ENCODE measurements at regions of chr5 and their contacts with region 1.

Region 1: DNA sequence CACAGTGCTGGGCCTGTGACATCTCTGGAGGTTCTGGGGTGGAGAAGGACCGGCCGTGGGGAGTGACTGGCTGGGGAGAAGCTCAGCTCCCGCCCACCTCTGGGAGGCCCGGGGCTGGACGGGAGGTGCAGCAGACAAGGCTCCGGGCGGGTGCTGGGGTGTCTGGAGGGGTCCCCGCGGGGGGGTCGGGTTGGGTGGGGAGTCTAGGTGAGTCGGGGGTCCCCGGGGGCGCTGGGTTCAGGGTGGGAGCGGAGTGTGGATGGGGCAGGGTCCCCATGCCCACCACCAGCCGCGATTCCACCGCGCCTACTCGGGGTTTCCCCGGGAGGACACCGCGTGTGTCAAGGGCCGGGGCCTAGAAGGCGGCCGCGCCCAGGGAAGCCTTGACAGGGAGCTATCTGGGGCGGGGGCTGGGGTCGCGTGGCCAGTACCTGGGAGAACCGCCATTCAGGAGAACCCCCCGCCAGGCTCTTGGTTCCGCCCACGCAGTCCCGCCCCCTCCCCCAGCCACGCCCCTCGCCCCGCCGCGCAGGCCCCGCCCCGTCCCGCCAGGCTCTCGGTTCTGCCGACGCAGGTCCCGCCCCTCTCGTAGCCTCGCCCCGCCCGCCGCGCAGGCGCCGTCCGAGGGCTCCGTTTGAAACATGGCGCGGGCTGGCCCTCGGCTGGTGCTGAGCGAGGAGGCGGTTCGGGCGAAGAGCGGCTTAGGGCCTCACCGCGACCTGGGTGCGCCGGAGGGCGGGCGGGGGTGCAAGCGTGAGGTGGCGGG is at the start of gene CEP72:
- DNase-seq: peak; percentile 92
- ATAC-seq: peak; percentile 95
- H3K4me3 ChIP-seq: peak within 1 kb of the TSS; percentile 62 to 83 (median 73)
- H3K4me3 Mint-ChIP-seq: peak within 1 kb of the TSS; percentile 92
- H3K27ac ChIP-seq: peak within 1 kb of the TSS; percentile 36 to 49
- H3K27ac Mint-ChIP-seq: peak within 1 kb of the TSS; percentile 87
- H3K4me1 ChIP-seq: peaks cover 23 to 28% of the 10 kb centered on the region in 2 donors
- H3K4me1 Mint-ChIP-seq: peaks cover 37% of the 10 kb centered on the region
- H3K27me3 ChIP-seq: peaks cover 0 to 19% (median 5%) of the 10 kb centered on the region in 4 experiments
- H3K27me3 Mint-ChIP-seq: peaks cover 9% of the 10 kb centered on the region
- CTCF ChIP-seq: no peak
- total RNA-seq, gene CEP72: 30.0 and 32.9 TPM in 2 replicates

Region 2: DNA sequence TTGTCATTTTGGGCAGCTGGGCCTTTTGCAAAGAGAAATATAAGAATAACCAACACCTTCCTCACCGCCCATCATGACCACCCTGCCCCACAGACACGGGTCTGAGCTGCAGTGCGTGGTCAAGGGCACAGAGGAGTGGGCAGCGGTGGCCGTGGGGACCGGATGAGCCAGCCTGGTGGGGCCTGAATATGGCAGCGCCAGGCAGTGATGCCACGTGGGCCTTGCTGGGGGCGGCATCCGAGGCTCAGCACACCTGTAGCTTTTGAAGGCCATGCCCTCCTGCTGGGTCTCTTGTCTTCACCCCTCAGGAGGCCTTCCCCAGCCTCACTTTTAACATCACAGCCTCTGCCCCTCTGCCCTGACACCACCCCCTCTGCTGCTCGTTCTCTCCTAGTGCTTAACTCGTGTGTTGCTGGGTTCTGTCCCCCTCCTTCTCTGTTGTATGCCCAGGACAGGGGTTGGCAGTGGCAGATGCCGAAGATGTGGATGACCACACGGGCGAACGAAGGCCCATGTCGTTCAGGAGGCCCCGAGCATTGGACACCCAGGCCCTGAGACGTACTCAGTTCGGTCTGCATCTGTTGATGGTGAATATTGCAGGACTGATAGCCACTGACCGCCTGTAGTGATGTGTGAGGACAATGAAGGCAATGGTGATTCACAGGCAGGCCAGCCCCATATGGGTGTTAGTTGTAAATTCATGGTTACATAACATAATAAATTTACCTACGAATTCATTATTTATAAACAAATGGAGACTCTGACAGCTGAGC is 244.4 kb before region 1 on chr5:
- CTCF ChIA-PET with region 1: no interaction called
- POLR2A ChIA-PET with region 1: no interaction called
- intact Hi-C with region 1: no loop called
- DNase-seq: no peak
- ATAC-seq: no peak
- H3K4me3 ChIP-seq: no peak overlapping the region
- H3K4me3 Mint-ChIP-seq: no peak overlapping the region
- H3K27ac ChIP-seq: no peak overlapping the region
- H3K27ac Mint-ChIP-seq: no peak overlapping the region
- H3K4me1 ChIP-seq: peaks cover 18 to 19% of the 10 kb centered on the region in 2 donors
- H3K4me1 Mint-ChIP-seq: peaks cover 28% of the 10 kb centered on the region
- H3K27me3 ChIP-seq: peaks cover 0 to 16% (median 3%) of the 10 kb centered on the region in 4 experiments
- H3K27me3 Mint-ChIP-seq: peaks cover 16% of the 10 kb centered on the region
- CTCF ChIP-seq: no peak

Region 3: DNA sequence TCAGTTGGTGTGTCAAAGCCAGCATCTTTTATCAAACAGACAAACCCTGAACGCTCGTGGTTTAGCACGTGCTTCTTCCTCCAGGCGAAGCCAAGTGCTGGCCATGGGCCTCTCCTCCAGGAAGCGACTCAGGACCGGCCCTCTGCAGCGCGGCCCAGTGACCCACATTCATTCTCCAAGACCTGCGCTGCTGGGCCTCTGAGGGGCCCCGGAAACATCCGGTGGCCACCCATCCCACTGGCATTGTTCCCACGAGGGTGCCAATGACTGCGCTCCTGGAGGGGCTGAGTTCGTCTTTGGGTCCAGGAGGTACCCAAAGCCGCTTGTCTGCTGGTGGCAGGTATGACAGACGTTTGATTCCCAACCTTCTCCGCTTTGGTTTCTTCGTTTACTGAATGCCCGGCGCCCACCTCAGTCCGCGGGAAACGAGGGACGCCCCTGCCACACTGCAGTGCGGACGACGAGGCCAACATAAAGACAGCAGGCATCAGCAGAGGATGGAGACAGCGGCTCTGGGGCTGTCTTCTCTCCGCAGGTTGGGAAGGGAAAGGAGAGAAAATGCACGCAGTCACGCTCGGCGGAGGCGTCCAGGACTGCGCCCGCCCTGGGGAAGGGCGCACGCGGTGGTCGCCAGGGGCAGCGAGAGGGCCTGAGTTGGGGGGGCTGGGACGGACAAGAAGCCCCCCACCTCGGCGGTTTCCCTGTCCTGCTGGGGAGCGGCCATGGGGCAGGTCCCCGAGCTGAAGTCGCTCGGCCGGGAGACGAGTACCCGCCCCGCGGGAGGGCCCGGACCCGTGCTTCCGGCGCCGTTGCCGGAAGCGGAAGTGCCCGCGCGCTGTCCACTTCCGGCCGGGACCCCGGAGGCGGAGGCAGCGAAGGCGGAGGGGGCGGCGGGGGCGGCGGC is 169.3 kb before region 1 on chr5 and contains the start of gene EXOC3:
- CTCF ChIA-PET with region 1: interaction called, 4 read pairs
- POLR2A ChIA-PET with region 1: no interaction called
- intact Hi-C with region 1: loop called (anchors 10 kb)
- DNase-seq: peak; percentile 82
- ATAC-seq: peak; percentile 91
- H3K4me3 ChIP-seq: peak within 1 kb of the TSS; percentile 53 to 91 (median 89)
- H3K4me3 Mint-ChIP-seq: peak within 1 kb of the TSS; percentile 96
- H3K27ac ChIP-seq: peak within 1 kb of the TSS; percentile 56 to 81
- H3K27ac Mint-ChIP-seq: peak within 1 kb of the TSS; percentile 90
- H3K4me1 ChIP-seq: peaks cover 6 to 19% of the 10 kb centered on the region in 2 donors
- H3K4me1 Mint-ChIP-seq: peaks cover 30% of the 10 kb centered on the region
- H3K27me3 ChIP-seq: no peaks in the 10 kb centered on the region
- H3K27me3 Mint-ChIP-seq: no peaks in the 10 kb centered on the region
- CTCF ChIP-seq: no peak
- total RNA-seq, gene EXOC3: 92.6 and 97.1 TPM in 2 replicates

Region 4: DNA sequence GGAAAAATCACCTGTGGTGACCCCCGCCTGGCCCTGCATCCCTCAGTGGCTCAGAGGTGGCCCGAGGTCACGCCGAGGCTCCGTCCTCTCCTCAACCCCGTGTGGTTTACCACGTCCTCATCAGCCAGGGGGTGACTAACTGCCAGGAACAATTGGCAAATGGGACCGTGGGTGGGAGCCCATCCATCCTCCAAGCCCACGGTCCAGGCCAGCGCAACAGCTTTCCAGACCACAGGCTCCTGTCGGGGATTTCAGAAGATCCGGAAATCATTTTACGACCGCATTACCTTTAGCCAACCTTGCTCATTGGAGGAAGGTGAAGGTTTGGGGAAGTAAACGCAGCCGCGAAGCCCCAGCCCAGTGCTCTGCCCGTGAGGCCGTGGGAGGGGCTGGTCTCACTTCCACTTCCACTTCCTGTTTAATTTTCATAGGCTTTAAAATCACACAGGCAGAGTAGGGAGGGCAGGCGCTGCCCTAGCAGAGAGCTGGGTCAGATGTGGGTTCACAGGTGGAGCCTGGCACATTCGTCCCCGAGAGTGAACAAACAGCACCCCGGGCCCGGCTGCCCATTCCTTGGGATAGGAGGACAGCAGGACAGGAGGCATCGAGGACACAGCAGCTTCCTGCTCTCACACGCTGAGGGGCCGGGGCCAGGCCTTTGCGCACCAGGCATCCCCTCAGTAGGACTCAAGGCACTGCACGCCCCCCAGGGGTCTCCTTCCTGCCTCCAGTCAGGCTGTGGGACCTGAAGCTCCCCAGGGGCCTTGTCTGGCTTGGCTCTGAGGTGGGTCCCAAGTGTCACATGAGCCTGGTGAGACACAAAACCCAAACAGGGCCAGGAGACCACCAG is 67.9 kb before region 1 on chr5:
- CTCF ChIA-PET with region 1: no interaction called
- POLR2A ChIA-PET with region 1: interaction called, 7 read pairs
- intact Hi-C with region 1: loop called (anchors 1 kb)
- DNase-seq: peak; percentile 93
- ATAC-seq: peak; percentile 94
- H3K4me3 ChIP-seq: peak overlapping the region in 3 of 5 experiments; percentile 24 to 56 (median 30)
- H3K4me3 Mint-ChIP-seq: peak overlapping the region; percentile 80
- H3K27ac ChIP-seq: peak overlapping the region; percentile 79 to 81
- H3K27ac Mint-ChIP-seq: peak overlapping the region; percentile 81
- H3K4me1 ChIP-seq: peaks cover 36 to 44% of the 10 kb centered on the region in 2 donors
- H3K4me1 Mint-ChIP-seq: peaks cover 28% of the 10 kb centered on the region
- H3K27me3 ChIP-seq: peaks cover 0 to 80% (median 31%) of the 10 kb centered on the region in 4 experiments
- H3K27me3 Mint-ChIP-seq: peaks cover 19% of the 10 kb centered on the region
- CTCF ChIP-seq: no peak

Region 5: GRCh38 chr5:902129-902916 is 290.4 kb after region 1 on chr5:
- CTCF ChIA-PET with region 1: no interaction called
- POLR2A ChIA-PET with region 1: no interaction called
- intact Hi-C with region 1: no loop called
- DNase-seq: no peak
- ATAC-seq: no peak
- H3K4me3 ChIP-seq: no peak overlapping the region
- H3K4me3 Mint-ChIP-seq: no peak overlapping the region
- H3K27ac ChIP-seq: no peak overlapping the region
- H3K27ac Mint-ChIP-seq: no peak overlapping the region
- H3K4me1 ChIP-seq: no peaks in the 10 kb centered on the region
- H3K4me1 Mint-ChIP-seq: peaks cover 2% of the 10 kb centered on the region
- H3K27me3 ChIP-seq: no peaks in the 10 kb centered on the region
- H3K27me3 Mint-ChIP-seq: no peaks in the 10 kb centered on the region
- CTCF ChIP-seq: no peak

Measured in B cell (primary cell).